B cell (primary cell): ENCODE measurements at regions of chr2 and their contacts with region 1.

Region 1: GRCh38 chr2:9508931-9509330 is 34.6 kb downstream of the IAH1 start:
- DNase-seq: no peak
- ATAC-seq: no peak
- H3K4me3 ChIP-seq: no peak overlapping the region
- H3K4me3 Mint-ChIP-seq: no peak overlapping the region
- H3K27ac ChIP-seq: no peak overlapping the region
- H3K27ac Mint-ChIP-seq: no peak overlapping the region
- H3K4me1 ChIP-seq: no peaks in the 10 kb centered on the region
- H3K4me1 Mint-ChIP-seq: no peaks in the 10 kb centered on the region
- H3K27me3 ChIP-seq: no peaks in the 10 kb centered on the region
- H3K27me3 Mint-ChIP-seq: no peaks in the 10 kb centered on the region
- CTCF ChIP-seq: no peak

Region 2: GRCh38 chr2:8678731-8679566 is 830.0 kb before region 1 on chr2:
- CTCF ChIA-PET with region 1: no interaction called
- POLR2A ChIA-PET with region 1: no interaction called
- intact Hi-C with region 1: no loop called
- DNase-seq: peak; percentile 74
- ATAC-seq: peak; percentile 37
- H3K4me3 ChIP-seq: peak overlapping the region in 3 of 5 experiments; percentile 15 to 23 (median 16)
- H3K4me3 Mint-ChIP-seq: peak overlapping the region; percentile 69
- H3K27ac ChIP-seq: no peak overlapping the region
- H3K27ac Mint-ChIP-seq: no peak overlapping the region
- H3K4me1 ChIP-seq: peaks cover 42 to 57% of the 10 kb centered on the region in 2 donors
- H3K4me1 Mint-ChIP-seq: peaks cover 47% of the 10 kb centered on the region
- H3K27me3 ChIP-seq: peaks cover 2 to 83% (median 58%) of the 10 kb centered on the region in 4 experiments
- H3K27me3 Mint-ChIP-seq: peaks cover 73% of the 10 kb centered on the region
- CTCF ChIP-seq: no peak

Region 3: DNA sequence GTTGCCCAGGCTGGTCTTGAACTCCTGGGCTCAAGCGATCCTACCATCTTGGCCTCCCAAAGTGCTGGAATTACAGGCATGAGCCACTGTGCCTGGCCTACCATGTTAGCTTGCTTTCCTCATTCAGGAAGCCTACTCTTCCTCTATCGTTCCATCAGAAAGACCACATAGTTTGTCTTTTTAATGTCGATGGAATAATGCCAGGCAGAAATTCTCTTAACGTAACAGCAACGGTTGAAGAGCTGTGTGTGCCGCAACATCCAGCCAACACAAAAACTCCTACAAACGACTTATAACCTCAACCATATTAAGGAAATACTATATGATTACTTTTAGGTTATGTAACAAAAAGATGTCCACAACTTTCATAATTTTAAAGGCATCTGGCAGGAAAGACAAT is 96.2 kb before region 1 on chr2:
- CTCF ChIA-PET with region 1: no interaction called
- POLR2A ChIA-PET with region 1: interaction called, 15 read pairs
- intact Hi-C with region 1: no loop called
- DNase-seq: no peak
- ATAC-seq: no peak
- H3K4me3 ChIP-seq: no peak overlapping the region
- H3K4me3 Mint-ChIP-seq: no peak overlapping the region
- H3K27ac ChIP-seq: no peak overlapping the region
- H3K27ac Mint-ChIP-seq: no peak overlapping the region
- H3K4me1 ChIP-seq: peaks cover 0 to 3% of the 10 kb centered on the region in 2 donors
- H3K4me1 Mint-ChIP-seq: peaks cover 3% of the 10 kb centered on the region
- H3K27me3 ChIP-seq: no peaks in the 10 kb centered on the region
- H3K27me3 Mint-ChIP-seq: no peaks in the 10 kb centered on the region
- CTCF ChIP-seq: no peak

Region 4: DNA sequence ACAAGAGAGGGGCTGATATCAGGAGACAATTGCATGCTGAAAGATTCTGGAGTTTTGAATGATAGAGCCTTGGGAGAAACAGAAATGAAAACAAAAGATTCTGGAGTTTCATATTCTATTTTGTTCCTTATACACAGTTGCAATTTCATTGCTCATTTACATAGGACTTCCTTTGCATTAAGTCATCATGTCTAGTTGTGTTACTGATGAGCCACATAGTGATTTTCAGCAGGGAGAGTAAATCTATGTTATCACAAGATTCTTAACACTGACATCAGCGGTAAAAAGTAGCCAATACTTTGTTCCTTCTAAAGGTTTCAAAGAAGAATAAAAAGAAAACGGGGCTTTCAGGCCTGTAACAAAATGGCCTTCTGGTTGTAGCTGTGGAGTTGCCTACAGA is 39.6 kb after region 1 on chr2:
- CTCF ChIA-PET with region 1: no interaction called
- POLR2A ChIA-PET with region 1: no interaction called
- intact Hi-C with region 1: loop called (anchors 5 kb)
- DNase-seq: peak; percentile 77
- ATAC-seq: peak; percentile 63
- H3K4me3 ChIP-seq: peak overlapping the region; percentile 16 to 66 (median 55)
- H3K4me3 Mint-ChIP-seq: peak overlapping the region; percentile 92
- H3K27ac ChIP-seq: peak overlapping the region; percentile 80 to 86
- H3K27ac Mint-ChIP-seq: peak overlapping the region; percentile 88
- H3K4me1 ChIP-seq: peaks cover 83 to 86% of the 10 kb centered on the region in 2 donors
- H3K4me1 Mint-ChIP-seq: peaks cover 72% of the 10 kb centered on the region
- H3K27me3 ChIP-seq: no peaks in the 10 kb centered on the region
- H3K27me3 Mint-ChIP-seq: no peaks in the 10 kb centered on the region
- CTCF ChIP-seq: no peak